ENCODE measurements at regions of chr6 and their contacts with region 1.

Region 1: DNA sequence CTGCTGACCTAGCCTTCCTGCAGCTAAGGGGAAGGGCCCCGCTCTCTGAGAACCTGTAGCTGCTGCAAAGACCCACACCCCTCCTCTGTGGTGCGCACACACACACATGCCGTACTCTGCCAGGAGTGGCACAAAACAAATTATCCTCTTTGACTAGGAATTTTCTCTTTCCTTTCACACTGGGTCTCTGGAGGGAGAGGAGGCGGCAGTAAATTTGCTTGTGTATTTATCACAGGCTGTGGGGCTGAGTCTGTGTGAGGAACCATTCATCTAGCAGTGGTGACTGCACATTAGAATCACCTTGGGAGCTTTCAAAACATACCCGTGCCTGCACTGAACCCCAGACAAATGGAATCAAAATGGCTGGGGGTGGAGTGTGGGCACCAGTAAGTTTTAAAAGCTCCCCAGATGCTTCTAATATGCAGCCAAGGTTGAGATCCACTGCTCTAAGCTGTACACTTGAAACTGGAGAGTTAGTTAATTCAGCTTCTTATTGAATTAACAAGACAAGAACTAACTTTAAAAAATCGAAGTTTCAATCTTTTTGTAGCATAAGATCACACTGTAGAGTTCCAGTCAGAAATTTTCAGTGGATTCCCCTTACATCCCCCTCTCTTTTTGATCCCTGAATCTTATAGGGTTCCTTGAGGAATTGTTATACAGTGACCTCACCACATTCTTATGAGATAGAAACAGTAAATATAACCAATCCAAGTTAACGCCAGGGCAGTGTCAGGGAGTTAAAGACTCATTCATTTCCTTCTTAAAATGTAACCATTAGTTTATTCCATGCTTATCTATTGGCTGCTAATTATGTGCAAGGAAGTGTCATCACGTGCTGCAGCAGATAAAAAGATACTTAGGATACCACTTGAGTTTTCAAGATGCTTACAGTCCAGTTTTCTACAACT is 29.8 kb upstream of the GMDS start:
- DNase-seq: no peak
- ATAC-seq: no peak
- H3K4me3 ChIP-seq: no peak overlapping the region
- H3K27ac ChIP-seq: no peak overlapping the region
- H3K4me1 ChIP-seq: no peaks in the 10 kb centered on the region
- H3K27me3 ChIP-seq: no peaks in the 10 kb centered on the region
- CTCF ChIP-seq: no peak
- POLR2A ChIP-seq: no peak
- RAD21 ChIP-seq: no peak

Region 2: GRCh38 chr6:2028457-2029038 is 246.7 kb before region 1 on chr6:
- CTCF ChIA-PET with region 1: no interaction called
- POLR2A ChIA-PET with region 1: no interaction called
- RAD21 ChIA-PET with region 1: no interaction called
- intact Hi-C with region 1: loop called (anchors 5 kb)
- DNase-seq: no peak
- ATAC-seq: no peak
- H3K4me3 ChIP-seq: no peak overlapping the region
- H3K27ac ChIP-seq: no peak overlapping the region
- H3K4me1 ChIP-seq: no peaks in the 10 kb centered on the region
- H3K27me3 ChIP-seq: no peaks in the 10 kb centered on the region
- CTCF ChIP-seq: no peak
- POLR2A ChIP-seq: no peak
- RAD21 ChIP-seq: no peak

Region 3: DNA sequence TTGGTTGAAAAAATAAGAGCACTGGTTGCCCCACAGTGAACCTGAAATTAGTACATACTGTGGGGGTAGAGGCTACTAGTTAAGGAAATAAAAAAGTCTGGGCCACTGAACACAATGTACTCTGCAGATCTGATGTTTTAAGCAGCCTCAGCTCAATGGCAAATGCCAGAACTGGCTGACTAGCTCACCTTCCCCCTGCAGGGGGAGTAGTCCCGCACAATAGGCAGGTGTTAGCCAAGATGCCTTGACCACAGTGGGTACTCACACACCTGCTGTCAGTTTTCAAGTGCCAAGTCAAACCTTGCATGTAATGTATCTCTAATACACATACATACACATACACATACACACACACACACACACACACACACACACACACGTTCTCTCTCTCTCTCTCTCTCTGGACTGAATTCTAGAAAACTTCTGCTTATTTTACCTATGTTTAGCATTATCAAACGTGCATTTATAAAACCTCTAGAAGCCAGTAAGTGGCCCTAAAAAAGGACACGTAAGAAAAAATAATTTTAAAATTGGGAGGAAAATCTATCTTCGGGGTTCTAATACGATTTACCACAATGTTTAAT is 65.9 kb before region 1 on chr6:
- CTCF ChIA-PET with region 1: no interaction called
- POLR2A ChIA-PET with region 1: no interaction called
- RAD21 ChIA-PET with region 1: no interaction called
- intact Hi-C with region 1: no loop called
- DNase-seq: peak; percentile 45
- ATAC-seq: peak; percentile 90
- H3K4me3 ChIP-seq: no peak overlapping the region
- H3K27ac ChIP-seq: no peak overlapping the region
- H3K4me1 ChIP-seq: no peaks in the 10 kb centered on the region
- H3K27me3 ChIP-seq: no peaks in the 10 kb centered on the region
- CTCF ChIP-seq: peak; percentile 35 to 69 (median 54); a peak in 5 of 6 replicates
- POLR2A ChIP-seq: no peak
- RAD21 ChIP-seq: peak; percentile 54

Region 4: GRCh38 chr6:2296781-2297180 is 21.5 kb after region 1 on chr6:
- CTCF ChIA-PET with region 1: no interaction called
- POLR2A ChIA-PET with region 1: no interaction called
- RAD21 ChIA-PET with region 1: no interaction called
- intact Hi-C with region 1: no loop called
- DNase-seq: no peak
- ATAC-seq: no peak
- H3K4me3 ChIP-seq: no peak overlapping the region
- H3K27ac ChIP-seq: no peak overlapping the region
- H3K4me1 ChIP-seq: no peaks in the 10 kb centered on the region
- H3K27me3 ChIP-seq: no peaks in the 10 kb centered on the region
- CTCF ChIP-seq: no peak
- POLR2A ChIP-seq: no peak
- RAD21 ChIP-seq: no peak

Measured in HCT116 (cell line).